ENCODE measurements at regions of chr14 and their contacts with region 1.

Region 1: GRCh38 chr14:44613174-44613586 is 106.1 kb upstream of the FSCB start:
- DNase-seq: peak; percentile 99
- H3K4me3 ChIP-seq: no peak overlapping the region
- H3K27ac ChIP-seq: peak overlapping the region; percentile 93
- H3K4me1 ChIP-seq: peaks cover 75% of the 10 kb centered on the region
- H3K27me3 ChIP-seq: no peaks in the 10 kb centered on the region
- CTCF ChIP-seq: no peak

Region 2: DNA sequence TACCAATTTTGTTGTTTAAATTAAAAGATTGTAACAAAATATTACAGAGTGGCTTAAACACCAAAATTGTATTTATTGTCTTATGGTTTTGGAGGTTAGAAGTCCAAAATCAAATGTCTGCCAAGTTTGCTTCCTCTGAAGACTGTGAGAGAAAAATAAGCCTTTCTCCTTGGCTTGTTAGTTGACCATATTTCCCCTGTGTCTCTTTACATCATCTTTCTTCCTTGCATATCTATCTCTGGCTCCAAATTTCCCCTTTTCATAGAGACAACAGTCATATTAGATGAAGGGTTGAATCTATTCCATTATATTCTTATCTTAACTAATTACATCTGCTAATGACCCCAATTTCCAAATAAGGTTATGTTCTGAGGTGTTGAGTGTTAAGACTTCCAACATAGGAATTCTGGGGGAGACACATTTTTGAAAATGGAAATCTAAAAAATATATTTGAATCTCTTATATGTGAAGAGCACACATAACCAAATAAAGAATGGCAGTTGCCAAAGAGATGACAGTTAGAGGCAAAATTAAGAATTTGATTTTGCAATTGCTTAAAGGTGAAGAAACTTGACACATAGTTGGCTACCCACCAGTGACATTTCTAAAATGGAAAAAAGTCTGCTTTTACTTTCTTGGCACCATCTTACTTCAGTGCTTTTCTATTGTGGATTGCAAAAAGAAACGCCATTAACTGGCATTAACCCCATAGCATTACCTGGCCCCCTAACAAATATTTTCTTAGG is 513.3 kb before region 1 on chr14:
- CTCF ChIA-PET with region 1: no interaction called
- POLR2A ChIA-PET with region 1: no interaction called
- intact Hi-C with region 1: loop called (anchors 2 kb)
- DNase-seq: no peak
- H3K4me3 ChIP-seq: no peak overlapping the region
- H3K27ac ChIP-seq: no peak overlapping the region
- H3K4me1 ChIP-seq: peaks cover 8% of the 10 kb centered on the region
- H3K27me3 ChIP-seq: no peaks in the 10 kb centered on the region
- CTCF ChIP-seq: no peak

Region 3: DNA sequence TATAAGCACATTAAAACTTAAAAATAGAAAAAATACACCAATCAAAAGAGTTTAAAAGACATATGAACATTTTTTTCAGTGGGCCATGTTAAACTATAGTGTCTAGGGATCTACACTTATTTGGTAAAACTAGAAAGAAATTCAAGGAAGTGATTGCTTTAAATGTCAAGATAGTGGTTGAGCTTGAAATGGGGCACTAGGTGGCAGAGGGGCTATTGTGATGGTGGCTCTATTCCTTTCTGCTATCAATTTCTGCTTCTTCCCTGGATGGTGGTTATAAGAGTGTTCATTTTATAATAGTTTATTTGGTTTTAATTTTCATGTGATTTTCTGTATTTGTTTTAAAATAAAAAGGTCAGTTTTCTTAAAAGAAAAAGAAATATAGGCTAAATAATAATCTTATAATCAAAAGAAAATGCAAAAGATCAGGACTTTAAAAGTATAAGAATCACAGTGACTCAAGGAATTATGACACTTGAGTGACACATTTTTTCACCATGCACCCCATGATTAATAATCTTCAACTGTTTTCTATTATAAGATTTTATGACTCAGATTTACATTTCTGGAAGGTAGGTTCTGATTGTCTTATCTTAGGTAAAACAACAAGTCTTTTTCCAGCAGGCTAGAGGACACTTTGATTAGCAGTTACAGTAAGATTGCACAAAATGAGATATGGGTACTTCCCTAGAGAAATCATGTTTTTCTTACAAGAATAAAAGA is 243.6 kb before region 1 on chr14:
- CTCF ChIA-PET with region 1: no interaction called
- POLR2A ChIA-PET with region 1: no interaction called
- intact Hi-C with region 1: loop called (anchors 2 kb)
- DNase-seq: peak; percentile 53
- H3K4me3 ChIP-seq: no peak overlapping the region
- H3K27ac ChIP-seq: peak overlapping the region; percentile 20
- H3K4me1 ChIP-seq: peaks cover 39% of the 10 kb centered on the region
- H3K27me3 ChIP-seq: no peaks in the 10 kb centered on the region
- CTCF ChIP-seq: peak; percentile 62

Region 4: GRCh38 chr14:45051180-45051579 is 438.0 kb after region 1 on chr14:
- CTCF ChIA-PET with region 1: no interaction called
- POLR2A ChIA-PET with region 1: no interaction called
- intact Hi-C with region 1: no loop called
- DNase-seq: no peak
- H3K4me3 ChIP-seq: no peak overlapping the region
- H3K27ac ChIP-seq: no peak overlapping the region
- H3K4me1 ChIP-seq: no peaks in the 10 kb centered on the region
- H3K27me3 ChIP-seq: no peaks in the 10 kb centered on the region
- CTCF ChIP-seq: no peak